A673 (cell line): ENCODE measurements at regions of chr16 and their contacts with region 1.

Region 1: GRCh38 chr16:30805370-30806169 is 18.6 kb upstream of the ZNF629 start:
- DNase-seq: peak; percentile 76
- H3K4me3 ChIP-seq: peak overlapping the region; percentile 75
- H3K27ac ChIP-seq: peak overlapping the region; percentile 78
- H3K4me1 ChIP-seq: no peaks in the 10 kb centered on the region
- H3K27me3 ChIP-seq: no peaks in the 10 kb centered on the region
- CTCF ChIP-seq: no peak

Region 2: DNA sequence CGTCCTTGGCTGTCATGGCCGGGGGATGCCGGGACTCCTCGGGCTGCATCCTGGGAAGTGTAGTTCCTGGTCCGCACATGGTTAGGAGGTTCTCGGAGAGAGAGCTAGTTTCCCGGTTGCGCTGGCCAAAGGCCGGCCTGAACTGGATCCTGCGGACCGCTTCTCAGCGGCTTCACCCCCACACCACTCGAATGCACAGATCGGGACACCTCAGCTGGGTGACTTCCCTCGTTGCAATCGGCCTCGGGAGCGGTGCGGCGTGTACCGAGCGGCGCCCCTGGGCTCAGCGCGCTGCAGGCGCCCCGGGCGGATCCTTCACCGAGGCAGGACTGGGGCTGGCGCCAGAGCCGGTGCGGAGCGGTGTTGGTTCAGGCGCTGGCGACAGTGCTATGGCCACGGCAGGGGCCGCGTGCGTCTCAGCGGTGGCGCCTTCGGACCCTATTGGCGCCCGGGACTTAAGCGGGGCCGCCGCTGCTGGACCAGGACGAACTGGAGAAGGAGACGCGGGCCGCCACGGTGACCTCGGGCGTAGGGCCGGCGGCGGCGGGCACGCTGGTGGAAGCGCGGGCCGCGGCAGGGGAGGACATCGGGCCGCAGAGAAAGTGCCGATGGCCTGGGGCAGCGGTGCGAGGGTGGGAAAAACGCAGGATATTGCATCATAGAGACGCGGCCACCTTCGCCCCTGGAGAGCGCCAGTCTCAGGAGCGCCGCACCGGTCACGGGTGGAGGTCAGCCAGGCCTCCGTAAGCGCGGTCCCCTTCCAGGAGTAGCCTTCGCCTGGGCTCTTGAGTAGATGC is 30.0 kb before region 1 on chr16:
- CTCF ChIA-PET with region 1: no interaction called
- POLR2A ChIA-PET with region 1: interaction called, 12 read pairs
- intact Hi-C with region 1: no loop called
- DNase-seq: peak; percentile 89
- H3K4me3 ChIP-seq: peak overlapping the region; percentile 72
- H3K27ac ChIP-seq: peak overlapping the region; percentile 90
- H3K4me1 ChIP-seq: peaks cover 4% of the 10 kb centered on the region
- H3K27me3 ChIP-seq: no peaks in the 10 kb centered on the region
- CTCF ChIP-seq: no peak

Region 3: GRCh38 chr16:30786936-30787612 is 18.5 kb before region 1 on chr16 and contains the start of gene ZNF629:
- CTCF ChIA-PET with region 1: no interaction called
- POLR2A ChIA-PET with region 1: interaction called, 3 read pairs
- intact Hi-C with region 1: loop called (anchors 1 kb)
- DNase-seq: peak; percentile 78
- H3K4me3 ChIP-seq: peak within 1 kb of the TSS; percentile 74
- H3K27ac ChIP-seq: peak within 1 kb of the TSS; percentile 80
- H3K4me1 ChIP-seq: no peaks in the 10 kb centered on the region
- H3K27me3 ChIP-seq: no peaks in the 10 kb centered on the region
- CTCF ChIP-seq: no peak
- total RNA-seq, gene ZNF629: 25.3 and 26.9 TPM in 2 replicates